ENCODE measurements at regions of chr10 and their contacts with region 1.

Region 1: DNA sequence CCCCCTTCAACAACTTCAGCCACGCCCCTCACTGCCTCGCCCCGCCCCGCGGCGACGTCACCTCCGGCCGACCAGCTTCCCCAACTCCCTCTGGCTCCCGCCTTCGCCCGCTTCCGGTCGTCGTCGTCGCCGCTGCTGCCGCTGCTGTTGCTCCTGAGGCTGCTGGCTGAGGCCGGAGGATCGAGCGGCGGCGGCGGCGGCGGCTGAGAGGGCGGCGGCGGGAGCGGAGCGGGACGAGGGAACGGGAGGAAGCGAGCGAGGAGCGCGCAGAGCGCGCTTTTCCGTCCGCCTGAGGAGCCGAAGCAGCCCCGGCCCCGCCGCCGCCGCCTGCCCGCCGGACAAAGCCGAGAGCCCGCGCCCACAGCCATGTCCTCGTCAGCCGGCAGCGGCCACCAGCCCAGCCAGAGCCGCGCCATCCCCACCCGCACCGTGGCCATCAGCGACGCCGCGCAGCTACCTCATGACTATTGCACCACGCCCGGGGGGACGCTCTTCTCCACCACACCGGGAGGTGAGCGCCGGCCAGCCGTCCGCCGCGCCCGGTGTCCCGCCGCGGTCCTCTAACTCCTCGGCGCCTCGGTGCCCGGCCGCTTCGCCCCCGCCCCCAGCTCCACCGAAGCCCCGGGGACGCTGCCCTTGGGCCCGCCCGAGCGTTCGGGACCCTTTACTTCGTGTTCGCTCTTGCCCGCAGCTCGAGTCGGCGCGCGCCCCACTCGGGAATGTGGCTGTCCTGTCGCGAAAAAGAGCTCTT is at the start of gene EIF4EBP2:
- DNase-seq: peak; percentile 96
- H3K4me3 Mint-ChIP-seq: peak within 1 kb of the TSS; percentile 84
- H3K27ac Mint-ChIP-seq: peak within 1 kb of the TSS; percentile 89
- H3K4me1 Mint-ChIP-seq: peaks cover 20% of the 10 kb centered on the region
- H3K27me3 Mint-ChIP-seq: no peaks in the 10 kb centered on the region
- CTCF ChIP-seq: no peak
- total RNA-seq, gene EIF4EBP2: 21.2 and 26.1 TPM in 2 replicates

Region 2: DNA sequence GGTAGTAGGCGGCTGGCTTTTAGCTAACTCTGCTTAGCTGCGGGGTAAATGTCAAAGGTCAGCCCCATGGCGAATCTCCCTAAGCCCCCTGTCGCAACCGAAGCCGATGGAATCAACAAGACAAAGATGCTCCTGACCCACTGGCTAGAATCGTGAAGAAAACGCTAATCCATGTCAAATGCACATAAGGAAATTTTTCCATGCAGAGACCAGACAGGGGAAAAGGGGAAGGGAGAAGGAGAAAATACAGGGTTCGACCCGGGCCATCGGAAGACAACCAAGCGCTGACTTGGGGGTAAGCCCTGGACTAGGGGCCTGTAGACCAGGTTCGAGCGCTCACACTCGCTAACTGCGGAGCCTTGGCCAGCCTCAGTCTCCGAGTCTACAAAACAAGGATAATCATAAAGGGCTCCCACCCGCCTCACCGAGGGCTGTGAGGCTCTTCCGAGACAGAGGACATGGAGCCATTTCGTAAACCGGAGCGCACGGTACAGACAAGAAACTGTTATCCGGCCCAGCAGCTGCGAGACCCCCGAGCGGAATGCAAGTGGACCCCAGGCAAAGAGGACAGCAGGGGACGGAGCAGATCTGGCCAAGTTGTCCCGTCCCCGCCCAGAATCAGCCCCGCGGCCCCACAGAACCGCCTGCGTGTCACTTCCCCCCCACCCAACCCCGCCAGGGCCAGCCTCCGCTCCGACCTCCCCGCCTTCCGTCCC is 234.4 kb before region 1 on chr10:
- CTCF ChIA-PET with region 1: no interaction called
- POLR2A ChIA-PET with region 1: interaction called, 34 read pairs
- intact Hi-C with region 1: no loop called
- DNase-seq: no peak
- H3K4me3 Mint-ChIP-seq: peak overlapping the region; percentile 90
- H3K27ac Mint-ChIP-seq: peak overlapping the region; percentile 98
- H3K4me1 Mint-ChIP-seq: peaks cover 30% of the 10 kb centered on the region
- H3K27me3 Mint-ChIP-seq: no peaks in the 10 kb centered on the region
- CTCF ChIP-seq: no peak

Region 3: GRCh38 chr10:70221030-70221429 is 183.2 kb before region 1 on chr10:
- CTCF ChIA-PET with region 1: interaction called, 9 read pairs
- POLR2A ChIA-PET with region 1: interaction called, 36 read pairs
- intact Hi-C with region 1: no loop called
- DNase-seq: no peak
- H3K4me3 Mint-ChIP-seq: peak overlapping the region; percentile 45
- H3K27ac Mint-ChIP-seq: peak overlapping the region; percentile 87
- H3K4me1 Mint-ChIP-seq: peaks cover 32% of the 10 kb centered on the region
- H3K27me3 Mint-ChIP-seq: no peaks in the 10 kb centered on the region
- CTCF ChIP-seq: no peak

Region 4: DNA sequence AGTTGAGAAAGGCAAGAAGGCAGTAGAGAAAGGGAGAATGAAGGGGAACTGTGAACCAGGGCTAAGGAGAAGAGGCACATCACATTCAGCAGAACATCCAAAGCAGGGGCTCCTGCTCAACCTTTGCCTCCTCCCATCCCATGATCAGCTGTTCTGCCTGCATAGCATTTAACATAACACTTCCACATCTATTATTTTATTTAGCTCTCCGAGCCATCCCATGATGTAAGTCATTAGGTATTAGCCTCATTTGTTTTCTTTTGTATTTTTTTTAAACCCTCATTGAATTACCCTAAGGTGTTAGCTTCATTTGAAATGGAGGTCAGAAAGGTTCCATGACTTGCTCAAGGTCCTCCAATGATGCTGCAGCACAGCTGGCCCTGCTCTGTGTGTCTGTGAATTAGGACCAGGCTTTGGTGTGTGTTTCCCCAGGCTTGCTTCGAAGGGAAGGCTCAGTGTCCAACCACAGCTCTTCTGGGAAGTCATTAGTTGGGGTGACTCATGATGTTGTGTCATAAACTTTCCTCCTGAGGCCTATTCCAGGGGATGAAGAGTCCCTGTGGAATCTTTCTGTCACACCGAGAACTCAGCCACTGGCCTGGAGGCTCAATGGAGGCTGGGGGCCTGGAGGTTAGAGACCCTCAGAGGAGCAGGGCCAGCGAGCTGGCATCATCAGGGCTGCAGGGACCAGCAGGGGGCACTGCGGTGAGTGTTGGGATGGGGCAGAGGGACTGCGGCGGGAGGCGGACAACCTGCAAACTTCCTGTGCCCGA is 136.9 kb before region 1 on chr10:
- CTCF ChIA-PET with region 1: no interaction called
- POLR2A ChIA-PET with region 1: interaction called, 10 read pairs
- intact Hi-C with region 1: no loop called
- DNase-seq: peak; percentile 95
- H3K4me3 Mint-ChIP-seq: peak overlapping the region; percentile 3
- H3K27ac Mint-ChIP-seq: peak overlapping the region; percentile 92
- H3K4me1 Mint-ChIP-seq: peaks cover 30% of the 10 kb centered on the region
- H3K27me3 Mint-ChIP-seq: no peaks in the 10 kb centered on the region
- CTCF ChIP-seq: peak; percentile 43

Region 5: GRCh38 chr10:70418229-70418628 is 14.0 kb after region 1 on chr10:
- CTCF ChIA-PET with region 1: interaction called, 4 read pairs
- POLR2A ChIA-PET with region 1: interaction called, 49 read pairs
- intact Hi-C with region 1: no loop called
- DNase-seq: peak; percentile 28
- H3K4me3 Mint-ChIP-seq: no peak overlapping the region
- H3K27ac Mint-ChIP-seq: peak overlapping the region; percentile 10
- H3K4me1 Mint-ChIP-seq: peaks cover 14% of the 10 kb centered on the region
- H3K27me3 Mint-ChIP-seq: no peaks in the 10 kb centered on the region
- CTCF ChIP-seq: no peak